ENCODE measurements at regions of chr15 and their contacts with region 1.

Region 1: GRCh38 chr15:84669726-84670125 is 11.7 kb upstream of the NMB start:
- DNase-seq: no peak
- H3K4me3 Mint-ChIP-seq: no peak overlapping the region
- H3K27ac Mint-ChIP-seq: peak overlapping the region; percentile 90
- H3K4me1 Mint-ChIP-seq: peaks cover 32% of the 10 kb centered on the region
- H3K27me3 Mint-ChIP-seq: no peaks in the 10 kb centered on the region

Region 2: GRCh38 chr15:84681831-84682230 is 12.1 kb after region 1 on chr15:
- intact Hi-C with region 1: loop called (anchors 2 kb)
- DNase-seq: no peak
- H3K4me3 Mint-ChIP-seq: no peak overlapping the region
- H3K27ac Mint-ChIP-seq: peak overlapping the region; percentile 62
- H3K4me1 Mint-ChIP-seq: peaks cover 17% of the 10 kb centered on the region
- H3K27me3 Mint-ChIP-seq: no peaks in the 10 kb centered on the region

Region 3: DNA sequence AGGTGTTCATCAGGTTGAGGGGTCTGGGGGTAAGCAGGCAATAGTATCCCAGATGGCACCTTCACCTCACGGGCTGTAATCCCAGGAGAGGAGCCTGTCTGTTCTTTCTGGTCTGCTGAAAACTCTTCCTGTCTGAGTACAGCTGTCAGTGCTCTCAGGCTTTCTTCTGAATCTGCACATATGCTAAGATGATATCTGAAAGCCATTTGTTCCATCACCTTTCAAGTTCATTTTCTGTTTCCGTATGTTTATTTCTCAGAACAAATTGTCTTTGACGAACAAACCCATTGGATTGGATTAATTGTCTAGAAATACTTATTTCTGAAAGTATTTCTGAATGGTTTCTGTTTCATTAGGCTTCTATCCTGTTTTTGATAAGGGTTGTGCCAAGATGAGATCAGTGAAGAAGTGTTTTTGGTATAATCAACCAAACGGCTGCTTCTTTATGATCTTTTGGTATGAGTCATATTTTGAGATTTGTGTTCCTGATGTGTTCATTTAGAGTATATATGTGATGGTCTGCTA is 91.9 kb after region 1 on chr15:
- intact Hi-C with region 1: loop called (anchors 1 kb)
- DNase-seq: peak; percentile 66
- H3K4me3 Mint-ChIP-seq: no peak overlapping the region
- H3K27ac Mint-ChIP-seq: no peak overlapping the region
- H3K4me1 Mint-ChIP-seq: peaks cover 21% of the 10 kb centered on the region
- H3K27me3 Mint-ChIP-seq: no peaks in the 10 kb centered on the region